Dendritic cell treated with granulocyte-macrophage colony-stimulating factor and Interleukin-4, amounts not matched to agents 40 ng/mL and 50 ng/mL, for 4 days (primary cell): ENCODE measurements at regions of chr9 and their contacts with region 1.

Region 1: DNA sequence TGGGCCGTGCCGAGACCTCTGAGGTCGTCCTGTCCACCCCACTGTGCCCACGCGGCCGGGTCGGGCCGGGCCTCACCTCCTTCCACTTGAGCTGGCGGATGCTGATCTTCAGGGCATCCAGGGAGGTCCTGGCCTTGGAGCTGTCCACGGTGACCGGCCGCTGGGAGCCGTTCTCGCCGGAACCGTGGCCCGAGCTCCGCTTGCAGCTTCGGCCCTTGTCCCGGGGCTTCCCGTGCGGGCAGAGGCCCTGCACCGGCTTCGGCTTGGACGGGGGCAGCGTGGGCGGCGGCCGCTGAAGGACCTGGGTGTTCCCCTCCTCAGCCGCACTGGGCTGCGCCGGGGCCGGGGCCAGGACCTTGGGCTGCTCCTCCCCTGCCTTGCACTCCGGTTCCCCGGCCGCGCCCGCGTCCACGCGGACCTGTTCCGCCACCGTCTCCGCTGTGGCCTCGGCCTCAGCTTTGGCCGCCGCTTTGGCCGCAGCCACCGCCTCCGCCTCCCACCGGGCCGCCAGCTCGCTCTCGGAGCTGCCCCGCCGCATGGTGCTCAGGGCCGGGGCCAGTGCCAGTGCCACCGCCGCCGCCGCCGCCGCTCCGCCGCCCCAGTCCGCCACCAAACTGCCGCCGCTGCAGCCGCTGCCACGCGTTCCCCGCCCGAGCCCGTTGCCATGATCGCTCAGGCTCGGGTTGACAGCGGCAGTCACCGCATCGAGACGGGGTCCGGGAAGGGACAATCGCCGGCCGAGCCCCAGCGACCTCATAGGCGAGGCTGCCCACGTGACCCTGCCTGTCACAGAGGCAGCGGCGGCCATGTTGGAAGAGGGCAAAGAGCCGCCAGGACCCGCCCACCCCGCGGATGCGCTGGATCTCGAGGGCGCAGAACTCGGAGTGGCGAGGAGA is at the start of gene TTLL11:
- H3K4me3 Mint-ChIP-seq: peak within 1 kb of the TSS; percentile 82
- H3K27ac Mint-ChIP-seq: peak within 1 kb of the TSS; percentile 65
- H3K4me1 Mint-ChIP-seq: peaks cover 52% of the 10 kb centered on the region
- H3K27me3 Mint-ChIP-seq: peaks cover 20% of the 10 kb centered on the region

Region 2: GRCh38 chr9:122056484-122056883 is 36.4 kb before region 1 on chr9:
- intact Hi-C with region 1: no loop called
- H3K4me3 Mint-ChIP-seq: no peak overlapping the region
- H3K27ac Mint-ChIP-seq: no peak overlapping the region
- H3K4me1 Mint-ChIP-seq: peaks cover 43% of the 10 kb centered on the region
- H3K27me3 Mint-ChIP-seq: no peaks in the 10 kb centered on the region

Region 3: DNA sequence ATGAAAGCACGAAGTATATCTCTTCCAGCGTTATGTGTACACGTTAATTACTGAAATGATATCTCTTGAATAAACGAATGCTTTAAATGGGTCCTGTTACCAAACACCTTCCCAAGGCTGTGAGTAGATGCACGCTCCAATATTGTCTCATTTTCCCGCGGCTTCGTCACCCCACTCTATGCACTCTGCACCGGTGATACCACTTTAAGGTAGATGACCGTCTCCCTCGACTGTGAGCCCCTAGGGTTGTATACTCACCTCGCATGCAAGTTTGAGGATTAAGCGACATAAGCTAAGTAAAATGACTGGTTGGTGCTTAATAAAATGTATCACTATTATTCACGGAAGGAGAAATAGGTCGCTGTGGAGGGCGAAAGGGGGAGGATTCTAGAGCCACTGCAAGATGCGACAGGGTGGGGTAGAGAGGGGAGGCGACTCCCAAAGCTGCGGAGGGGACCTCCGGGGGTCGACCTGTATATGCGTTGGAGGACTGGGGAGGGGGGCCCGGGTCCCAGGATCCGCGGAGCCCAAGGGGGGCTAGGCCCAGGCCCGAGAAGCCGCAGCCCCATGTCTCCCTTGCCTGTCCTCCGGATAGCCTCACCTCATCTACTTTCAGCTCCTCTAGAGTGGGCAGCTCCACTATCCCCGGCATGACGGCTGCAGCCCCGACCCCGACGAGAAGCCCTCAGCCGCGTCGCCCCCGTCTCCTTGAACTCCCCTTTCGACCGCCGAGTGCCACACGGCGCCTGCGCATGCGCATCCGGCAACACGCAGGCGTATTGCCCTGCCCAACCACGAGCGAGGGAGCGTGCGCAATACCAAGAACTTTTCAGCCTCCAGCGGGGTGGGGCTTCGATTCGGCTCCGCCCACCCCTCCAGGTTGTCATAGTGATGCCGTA is 66.4 kb after region 1 on chr9 and contains the starts of genes MORN5 and NDUFA8:
- intact Hi-C with region 1: loop called (anchors 1 kb)
- H3K4me3 Mint-ChIP-seq: peak within 1 kb of the TSS; percentile 88
- H3K27ac Mint-ChIP-seq: peak within 1 kb of the TSS; percentile 85
- H3K4me1 Mint-ChIP-seq: peaks cover 31% of the 10 kb centered on the region
- H3K27me3 Mint-ChIP-seq: peaks cover 13% of the 10 kb centered on the region

Region 4: DNA sequence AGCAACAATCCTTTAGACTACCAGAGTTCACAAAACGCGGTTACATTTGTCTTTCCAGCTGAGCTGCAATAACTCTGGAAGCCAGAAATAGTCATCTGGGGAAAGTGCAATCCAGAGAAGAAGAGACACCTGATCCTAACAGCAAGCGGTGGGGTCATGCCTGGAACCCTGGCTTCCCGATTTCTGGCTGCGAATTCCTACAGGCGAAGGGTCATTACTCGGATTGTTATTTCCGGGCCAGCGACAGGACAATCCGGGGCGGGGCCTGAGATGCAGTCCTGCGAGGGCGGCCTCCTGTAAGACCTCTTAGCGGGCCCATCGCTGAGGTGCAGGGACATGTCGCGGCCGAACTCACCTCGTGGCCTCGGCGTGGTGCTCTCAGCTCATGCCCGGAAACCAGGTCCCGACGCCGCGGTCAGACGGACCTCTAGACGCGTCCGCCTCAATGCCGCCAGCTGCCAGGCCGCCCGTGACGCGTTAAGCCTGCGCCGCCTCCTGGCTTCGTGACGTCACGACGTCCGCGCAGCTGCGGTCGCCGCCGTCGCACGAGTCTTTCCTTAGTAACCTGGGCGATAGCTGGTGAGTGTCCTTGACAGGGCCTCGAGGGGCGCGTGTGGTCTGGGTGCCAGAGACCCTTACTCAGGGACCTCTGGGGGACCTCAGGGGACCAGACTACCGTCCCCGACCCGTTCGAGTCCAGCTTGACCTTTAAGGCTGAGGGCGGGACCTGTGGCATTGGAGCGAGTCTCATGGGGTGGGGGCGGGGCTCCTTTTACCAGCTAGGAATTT is 171.7 kb after region 1 on chr9 and contains the starts of genes MRRF and RBM18:
- intact Hi-C with region 1: loop called (anchors 2 kb)
- H3K4me3 Mint-ChIP-seq: peak within 1 kb of the TSS; percentile 99
- H3K27ac Mint-ChIP-seq: peak within 1 kb of the TSS; percentile 98
- H3K4me1 Mint-ChIP-seq: peaks cover 47% of the 10 kb centered on the region
- H3K27me3 Mint-ChIP-seq: no peaks in the 10 kb centered on the region